ENCODE measurements at regions of chr3 and their contacts with region 1.

Region 1: DNA sequence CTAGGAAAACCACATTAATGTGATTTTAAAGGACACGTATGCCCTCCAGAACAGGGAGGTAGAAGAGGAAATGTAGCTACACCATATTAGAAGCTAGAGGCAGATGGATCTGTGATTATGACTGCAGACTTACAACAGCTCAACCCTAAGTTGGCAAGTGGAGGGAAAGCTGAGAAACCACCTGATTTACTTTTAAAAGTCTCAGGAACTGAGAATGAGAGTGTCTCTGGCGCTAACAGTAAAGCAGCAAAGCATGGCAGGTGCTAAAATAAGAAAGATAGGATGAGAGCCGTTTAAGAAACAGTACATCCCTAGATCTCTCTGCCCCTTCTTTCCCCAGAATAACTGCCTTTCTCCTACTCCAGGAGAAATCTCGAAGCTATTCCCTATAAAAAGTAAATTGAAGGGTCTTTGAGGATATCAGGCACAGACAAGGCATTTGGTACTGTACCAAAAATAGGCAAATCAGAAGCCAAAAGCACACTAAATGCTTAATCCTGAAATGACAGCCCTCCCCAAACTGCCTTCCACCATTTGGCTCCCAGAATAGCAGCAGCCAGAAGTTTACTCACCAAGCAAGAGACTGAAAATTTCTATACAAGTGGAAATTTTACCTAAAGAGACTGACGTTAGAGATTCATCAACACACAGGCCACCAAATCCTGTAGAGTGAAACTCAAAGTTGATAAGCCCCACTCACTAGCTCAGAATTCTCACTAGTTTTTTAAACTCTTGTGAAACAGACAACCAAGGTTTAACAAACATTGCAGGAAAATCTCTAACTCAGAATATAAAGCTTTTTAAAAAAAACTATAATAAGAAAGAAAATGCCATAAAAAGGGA is 34.3 kb upstream of the PARP14 start:
- DNase-seq: no peak
- H3K4me3 Mint-ChIP-seq: peak overlapping the region; percentile 72
- H3K27ac Mint-ChIP-seq: peak overlapping the region; percentile 79
- H3K4me1 Mint-ChIP-seq: peaks cover 50% of the 10 kb centered on the region
- H3K27me3 Mint-ChIP-seq: peaks cover 8% of the 10 kb centered on the region

Region 2: GRCh38 chr3:122603056-122603455 is 43.3 kb before region 1 on chr3:
- CTCF ChIA-PET with region 1: no interaction called
- POLR2A ChIA-PET with region 1: no interaction called
- DNase-seq: no peak
- H3K4me3 Mint-ChIP-seq: no peak overlapping the region
- H3K27ac Mint-ChIP-seq: no peak overlapping the region
- H3K4me1 Mint-ChIP-seq: peaks cover 6% of the 10 kb centered on the region
- H3K27me3 Mint-ChIP-seq: no peaks in the 10 kb centered on the region

Region 3: GRCh38 chr3:122668930-122669730 is 22.8 kb after region 1 on chr3:
- CTCF ChIA-PET with region 1: interaction called, 8 read pairs
- POLR2A ChIA-PET with region 1: interaction called, 10 read pairs
- DNase-seq: peak; percentile 26
- H3K4me3 Mint-ChIP-seq: no peak overlapping the region
- H3K27ac Mint-ChIP-seq: peak overlapping the region; percentile 37
- H3K4me1 Mint-ChIP-seq: peaks cover 17% of the 10 kb centered on the region
- H3K27me3 Mint-ChIP-seq: no peaks in the 10 kb centered on the region

Measured in activated CD4-positive, alpha-beta memory T cell treated with anti-CD3 and anti-CD28 coated beads, Interleukin-2, amount 10 ng/mL, durations not matched to agents 7 days and 5 days (primary cell).